Posterior cingulate gyrus (tissue), 11 donors: ENCODE measurements at regions of chr15 and their contacts with region 1.

Region 1: GRCh38 chr15:59688841-59689625 is at the start of gene BNIP2:
- DNase-seq: peak; percentile 90 to 99 (median 94)

Region 2: DNA sequence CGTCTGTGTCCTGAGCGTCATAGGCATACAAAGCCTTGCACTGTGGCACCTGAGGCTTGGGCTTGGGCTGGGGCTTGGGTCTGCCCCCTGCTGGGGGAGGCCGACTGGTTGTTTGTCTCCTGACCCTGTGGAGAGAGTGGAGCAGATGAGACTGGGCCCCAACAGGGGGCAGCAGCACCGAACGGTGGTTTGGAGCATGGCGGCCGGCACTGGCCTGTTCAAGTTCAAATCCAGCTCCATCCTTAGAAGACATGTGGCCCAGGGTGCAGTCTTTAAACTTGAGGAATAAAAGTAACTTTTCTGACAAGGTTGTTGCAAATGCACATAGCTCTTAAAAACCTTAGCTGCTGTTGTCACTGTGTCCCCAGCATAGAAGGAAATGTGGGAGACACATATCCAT is 550.8 kb before region 1 on chr15:
- intact Hi-C with region 1: no loop called
- DNase-seq: peak in 1 of 10 donors; percentile 20

Region 3: DNA sequence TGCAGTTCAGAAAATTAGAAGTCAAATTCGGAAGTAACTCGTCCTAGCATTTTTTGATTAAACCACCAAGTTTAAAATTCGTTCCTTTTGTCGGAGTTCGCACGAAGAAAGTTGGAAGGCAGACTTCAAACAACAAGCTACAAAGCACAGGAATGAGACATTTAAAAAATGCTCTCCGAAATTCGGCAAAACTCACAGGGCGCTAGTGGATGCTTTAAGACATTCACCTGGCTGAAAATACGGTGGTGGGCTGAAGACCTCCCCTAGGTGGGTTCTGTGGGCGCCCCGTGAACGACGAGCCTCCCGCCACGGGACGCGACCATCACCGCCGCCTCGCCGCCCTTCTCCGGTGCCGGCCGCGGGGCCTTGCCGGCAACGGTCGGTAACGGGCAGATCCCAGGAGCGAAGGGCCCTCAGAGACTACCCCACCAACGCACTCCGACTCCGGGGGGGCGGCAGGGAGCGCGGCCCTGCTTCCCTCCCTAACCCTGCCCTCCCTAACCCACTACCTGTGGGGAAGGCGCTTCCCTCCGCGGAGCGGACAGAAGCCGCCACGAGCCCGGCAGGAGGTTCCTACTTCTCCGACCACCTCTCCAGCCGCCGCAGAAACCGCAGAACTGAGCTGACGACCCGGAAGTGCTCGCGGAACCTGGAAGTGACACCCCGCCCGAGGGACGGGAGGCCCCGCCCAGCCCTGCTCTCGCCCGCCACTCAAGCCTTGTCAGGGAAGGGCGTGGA is 32.0 kb before region 1 on chr15 and contains the start of gene GTF2A2:
- intact Hi-C with region 1: loop called (anchors 2 kb)
- DNase-seq: peak; percentile 91 to 99 (median 96)